CD8-positive, alpha-beta T cell (primary cell): ENCODE measurements at regions of chr6 and their contacts with region 1.

Region 1: GRCh38 chr6:37483917-37484785 is 15.5 kb downstream of the CCDC167 start:
- DNase-seq: peak; percentile 59 to 90 (median 77)
- ATAC-seq: peak; percentile 93
- H3K4me3 ChIP-seq: no peak overlapping the region
- H3K4me3 Mint-ChIP-seq: no peak overlapping the region
- H3K27ac ChIP-seq: peak overlapping the region in 1 of 2 experiments; percentile 47
- H3K27ac Mint-ChIP-seq: no peak overlapping the region
- H3K4me1 ChIP-seq: peaks cover 14% of the 10 kb centered on the region
- H3K4me1 Mint-ChIP-seq: peaks cover 13% of the 10 kb centered on the region
- H3K27me3 ChIP-seq: no peaks in the 10 kb centered on the region
- H3K27me3 Mint-ChIP-seq: no peaks in the 10 kb centered on the region
- CTCF ChIP-seq: peak; percentile 93

Region 2: GRCh38 chr6:37251211-37251780 is 232.9 kb before region 1 on chr6:
- CTCF ChIA-PET with region 1: no interaction called
- POLR2A ChIA-PET with region 1: no interaction called
- intact Hi-C with region 1: no loop called
- DNase-seq: no peak
- ATAC-seq: no peak
- H3K4me3 ChIP-seq: no peak overlapping the region
- H3K4me3 Mint-ChIP-seq: no peak overlapping the region
- H3K27ac ChIP-seq: no peak overlapping the region
- H3K27ac Mint-ChIP-seq: no peak overlapping the region
- H3K4me1 ChIP-seq: no peaks in the 10 kb centered on the region
- H3K4me1 Mint-ChIP-seq: no peaks in the 10 kb centered on the region
- H3K27me3 ChIP-seq: peaks cover 0 to 2% of the 10 kb centered on the region in 2 experiments
- H3K27me3 Mint-ChIP-seq: no peaks in the 10 kb centered on the region
- CTCF ChIP-seq: no peak

Region 3: GRCh38 chr6:37381579-37381978 is 102.6 kb before region 1 on chr6:
- CTCF ChIA-PET with region 1: interaction called, 3 read pairs
- POLR2A ChIA-PET with region 1: no interaction called
- intact Hi-C with region 1: loop called in 1 of 2 experiments (anchors 5 kb)
- DNase-seq: peak in 4 of 9 experiments; percentile 10 to 71 (median 42)
- ATAC-seq: peak; percentile 34
- H3K4me3 ChIP-seq: no peak overlapping the region
- H3K4me3 Mint-ChIP-seq: no peak overlapping the region
- H3K27ac ChIP-seq: no peak overlapping the region
- H3K27ac Mint-ChIP-seq: no peak overlapping the region
- H3K4me1 ChIP-seq: no peaks in the 10 kb centered on the region
- H3K4me1 Mint-ChIP-seq: no peaks in the 10 kb centered on the region
- H3K27me3 ChIP-seq: no peaks in the 10 kb centered on the region
- H3K27me3 Mint-ChIP-seq: no peaks in the 10 kb centered on the region
- CTCF ChIP-seq: peak; percentile 40

Region 4: DNA sequence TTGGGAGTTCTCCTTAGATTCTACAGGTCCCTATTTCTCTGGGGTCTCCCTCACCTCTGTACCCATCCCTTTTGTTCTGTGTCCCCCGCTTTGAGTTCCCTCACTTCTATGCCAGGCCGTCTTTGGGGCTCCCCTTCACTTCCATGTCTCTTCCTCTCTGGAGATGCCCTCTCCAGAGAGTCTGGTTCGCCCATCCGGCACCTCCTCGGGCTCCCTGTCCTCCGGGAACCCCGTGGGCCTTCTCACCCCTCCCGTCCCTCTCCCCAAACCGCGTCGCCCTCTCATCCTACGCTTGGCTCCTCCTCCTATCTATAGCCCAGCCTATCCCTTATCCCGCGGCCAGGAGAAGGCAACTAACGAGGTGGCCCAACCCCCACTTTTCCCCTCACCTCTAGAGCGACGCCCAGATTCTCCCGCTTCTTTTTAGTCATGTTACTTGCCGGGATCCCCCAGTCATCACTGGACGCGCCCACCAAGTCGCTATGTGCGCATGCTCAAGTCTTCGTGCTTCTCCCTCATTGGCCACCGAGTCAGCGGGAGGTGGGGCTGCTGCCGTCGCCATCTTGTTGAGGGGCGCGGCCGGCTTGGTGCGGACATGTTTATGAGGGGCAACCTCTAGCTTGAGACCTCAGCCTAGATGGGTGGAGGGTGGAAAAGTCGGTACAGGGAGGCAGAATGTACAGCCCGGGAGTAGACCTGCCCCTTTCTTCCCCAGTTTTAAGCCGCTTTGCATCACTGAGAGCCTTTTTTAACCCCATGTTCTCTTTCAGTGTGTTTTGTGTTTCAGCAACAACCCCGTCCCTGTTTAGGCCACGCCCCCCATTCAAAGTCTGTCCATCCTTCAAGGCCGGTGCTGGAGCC is 15.5 kb after region 1 on chr6 and contains the start of gene CCDC167:
- CTCF ChIA-PET with region 1: interaction called, 24 read pairs
- POLR2A ChIA-PET with region 1: interaction called, 4 read pairs
- intact Hi-C with region 1: loop called in 1 of 2 experiments (anchors 2 kb)
- DNase-seq: peak; percentile 90 to 98 (median 96)
- ATAC-seq: peak; percentile 69
- H3K4me3 ChIP-seq: peak within 1 kb of the TSS; percentile 86 to 94
- H3K4me3 Mint-ChIP-seq: peak within 1 kb of the TSS; percentile 98
- H3K27ac ChIP-seq: peak within 1 kb of the TSS; percentile 59 to 77
- H3K27ac Mint-ChIP-seq: peak within 1 kb of the TSS; percentile 96
- H3K4me1 ChIP-seq: peaks cover 64% of the 10 kb centered on the region
- H3K4me1 Mint-ChIP-seq: peaks cover 74% of the 10 kb centered on the region
- H3K27me3 ChIP-seq: no peaks in the 10 kb centered on the region
- H3K27me3 Mint-ChIP-seq: no peaks in the 10 kb centered on the region
- CTCF ChIP-seq: no peak
- total RNA-seq, gene CCDC167: 5.4 to 6.2 TPM

Region 5: GRCh38 chr6:37516076-37516919 is 32.1 kb after region 1 on chr6:
- CTCF ChIA-PET with region 1: interaction called, 9 read pairs
- POLR2A ChIA-PET with region 1: interaction called, 11 read pairs
- intact Hi-C with region 1: loop called (anchors 1 to 5 kb)
- DNase-seq: peak; percentile 76 to 99 (median 90)
- ATAC-seq: peak; percentile 80
- H3K4me3 ChIP-seq: peak overlapping the region; percentile 35 to 52
- H3K4me3 Mint-ChIP-seq: peak overlapping the region; percentile 88
- H3K27ac ChIP-seq: peak overlapping the region; percentile 80 to 94
- H3K27ac Mint-ChIP-seq: peak overlapping the region; percentile 99
- H3K4me1 ChIP-seq: peaks cover 85% of the 10 kb centered on the region
- H3K4me1 Mint-ChIP-seq: peaks cover 80% of the 10 kb centered on the region
- H3K27me3 ChIP-seq: no peaks in the 10 kb centered on the region
- H3K27me3 Mint-ChIP-seq: no peaks in the 10 kb centered on the region
- CTCF ChIP-seq: no peak

Region 6: DNA sequence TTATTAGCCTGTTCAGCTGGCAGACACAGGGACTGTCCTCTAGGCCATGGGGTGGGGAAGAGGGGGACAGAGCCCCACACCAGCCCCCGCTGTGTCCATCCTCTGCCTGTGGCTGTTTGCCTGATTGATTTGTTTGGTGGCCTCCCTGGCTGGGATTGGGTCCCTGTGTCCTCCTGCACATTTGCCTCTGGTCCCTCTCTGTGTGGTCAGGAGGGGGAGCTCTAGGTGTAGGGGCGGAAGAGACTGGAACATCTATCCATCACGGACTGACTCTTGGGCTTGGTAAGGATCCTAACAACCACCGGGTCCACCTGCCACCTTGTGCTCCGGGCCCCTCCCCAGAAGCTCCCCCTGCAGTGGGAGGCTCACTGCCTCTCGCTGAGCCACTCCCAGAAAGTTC is 54.0 kb after region 1 on chr6:
- CTCF ChIA-PET with region 1: interaction called, 12 read pairs
- POLR2A ChIA-PET with region 1: no interaction called
- intact Hi-C with region 1: no loop called
- DNase-seq: peak in 1 of 9 experiments; percentile 28
- ATAC-seq: no peak
- H3K4me3 ChIP-seq: no peak overlapping the region
- H3K4me3 Mint-ChIP-seq: no peak overlapping the region
- H3K27ac ChIP-seq: no peak overlapping the region
- H3K27ac Mint-ChIP-seq: peak overlapping the region; percentile 84
- H3K4me1 ChIP-seq: peaks cover 7% of the 10 kb centered on the region
- H3K4me1 Mint-ChIP-seq: peaks cover 22% of the 10 kb centered on the region
- H3K27me3 ChIP-seq: no peaks in the 10 kb centered on the region
- H3K27me3 Mint-ChIP-seq: no peaks in the 10 kb centered on the region
- CTCF ChIP-seq: no peak

Region 7: GRCh38 chr6:38012573-38012972 is 528.4 kb after region 1 on chr6:
- CTCF ChIA-PET with region 1: no interaction called
- POLR2A ChIA-PET with region 1: no interaction called
- intact Hi-C with region 1: loop called in 1 of 2 experiments (anchors 2 kb)
- DNase-seq: peak in 6 of 9 experiments; percentile 16 to 59 (median 32)
- ATAC-seq: peak; percentile 59
- H3K4me3 ChIP-seq: no peak overlapping the region
- H3K4me3 Mint-ChIP-seq: no peak overlapping the region
- H3K27ac ChIP-seq: no peak overlapping the region
- H3K27ac Mint-ChIP-seq: no peak overlapping the region
- H3K4me1 ChIP-seq: no peaks in the 10 kb centered on the region
- H3K4me1 Mint-ChIP-seq: peaks cover 36% of the 10 kb centered on the region
- H3K27me3 ChIP-seq: no peaks in the 10 kb centered on the region
- H3K27me3 Mint-ChIP-seq: no peaks in the 10 kb centered on the region
- CTCF ChIP-seq: peak; percentile 37

Region 8: GRCh38 chr6:38143191-38144150 is 659.3 kb after region 1 on chr6:
- CTCF ChIA-PET with region 1: no interaction called
- POLR2A ChIA-PET with region 1: no interaction called
- intact Hi-C with region 1: no loop called
- DNase-seq: no peak
- ATAC-seq: no peak
- H3K4me3 ChIP-seq: no peak overlapping the region
- H3K4me3 Mint-ChIP-seq: no peak overlapping the region
- H3K27ac ChIP-seq: no peak overlapping the region
- H3K27ac Mint-ChIP-seq: peak overlapping the region; percentile 6
- H3K4me1 ChIP-seq: no peaks in the 10 kb centered on the region
- H3K4me1 Mint-ChIP-seq: peaks cover 17% of the 10 kb centered on the region
- H3K27me3 ChIP-seq: no peaks in the 10 kb centered on the region
- H3K27me3 Mint-ChIP-seq: no peaks in the 10 kb centered on the region
- CTCF ChIP-seq: no peak

Region 9: GRCh38 chr6:38671885-38672467 is 1187.8 kb after region 1 on chr6:
- CTCF ChIA-PET with region 1: no interaction called
- POLR2A ChIA-PET with region 1: no interaction called
- intact Hi-C with region 1: loop called in 1 of 2 experiments (anchors 10 kb)
- DNase-seq: peak in 4 of 9 experiments; percentile 24 to 70 (median 43)
- ATAC-seq: peak; percentile 74
- H3K4me3 ChIP-seq: no peak overlapping the region
- H3K4me3 Mint-ChIP-seq: no peak overlapping the region
- H3K27ac ChIP-seq: no peak overlapping the region
- H3K27ac Mint-ChIP-seq: no peak overlapping the region
- H3K4me1 ChIP-seq: peaks cover 6% of the 10 kb centered on the region
- H3K4me1 Mint-ChIP-seq: peaks cover 6% of the 10 kb centered on the region
- H3K27me3 ChIP-seq: no peaks in the 10 kb centered on the region
- H3K27me3 Mint-ChIP-seq: no peaks in the 10 kb centered on the region
- CTCF ChIP-seq: peak; percentile 75